Naive thymus-derived CD4-positive, alpha-beta T cell (primary cell): ENCODE measurements at regions of chrX and their contacts with region 1.

Region 1: DNA sequence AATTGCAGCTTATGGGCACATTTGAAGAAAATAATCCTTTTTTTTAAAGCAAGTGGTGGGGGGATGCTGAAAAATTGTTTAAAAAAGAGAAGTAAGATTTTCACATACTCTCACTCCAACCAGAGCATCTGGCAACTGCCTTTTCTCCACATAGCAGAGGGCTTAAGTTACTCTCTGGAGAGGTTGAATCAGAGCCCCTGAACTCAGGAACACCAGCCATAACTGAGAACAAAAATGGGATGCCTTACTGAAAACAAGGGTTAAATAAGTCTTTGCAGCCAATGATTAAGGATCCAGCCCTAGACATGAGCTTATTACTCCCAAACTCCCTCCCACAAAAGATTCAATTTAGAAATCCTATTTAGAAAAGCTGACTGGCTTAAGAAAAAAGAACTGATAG is 27.5 kb downstream of the CASK start:
- DNase-seq: no peak
- ATAC-seq: no peak
- H3K4me3 ChIP-seq: no peak overlapping the region
- H3K4me3 Mint-ChIP-seq: no peak overlapping the region
- H3K27ac ChIP-seq: no peak overlapping the region
- H3K27ac Mint-ChIP-seq: no peak overlapping the region
- H3K4me1 ChIP-seq: no peaks in the 10 kb centered on the region
- H3K4me1 Mint-ChIP-seq: peaks cover 0 to 8% (median 0%) of the 10 kb centered on the region in 7 donors
- H3K27me3 ChIP-seq: no peaks in the 10 kb centered on the region
- H3K27me3 Mint-ChIP-seq: no peaks in the 10 kb centered on the region

Region 2: DNA sequence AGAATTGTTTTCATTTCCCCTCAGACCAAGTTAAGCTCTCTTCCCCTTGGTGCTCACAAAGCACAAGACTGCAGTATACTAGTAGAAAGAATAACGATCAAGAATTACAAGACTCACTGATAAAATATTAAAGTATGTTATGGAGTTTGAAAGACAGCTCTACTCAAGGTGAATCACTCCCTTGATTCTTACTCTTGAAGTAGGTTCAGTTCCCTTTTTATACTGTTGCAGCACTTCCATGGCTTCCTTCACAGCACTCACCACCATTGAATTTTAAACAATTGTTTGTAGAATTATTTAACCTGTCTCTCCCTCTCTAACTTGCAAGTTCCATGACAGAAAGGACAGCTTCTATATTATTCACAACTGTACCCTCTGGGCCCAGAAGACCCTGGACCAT is 14.7 kb before region 1 on chrX:
- CTCF ChIA-PET with region 1: no interaction called
- POLR2A ChIA-PET with region 1: no interaction called
- intact Hi-C with region 1: loop called in 1 of 2 experiments (anchors 2 kb)
- DNase-seq: no peak
- ATAC-seq: peak; percentile 40
- H3K4me3 ChIP-seq: no peak overlapping the region
- H3K4me3 Mint-ChIP-seq: peak overlapping the region in 1 of 10 donors; percentile 15
- H3K27ac ChIP-seq: no peak overlapping the region
- H3K27ac Mint-ChIP-seq: no peak overlapping the region
- H3K4me1 ChIP-seq: peaks cover 0 to 3% of the 10 kb centered on the region in 2 donors
- H3K4me1 Mint-ChIP-seq: peaks cover 6 to 55% (median 34%) of the 10 kb centered on the region in 7 donors
- H3K27me3 ChIP-seq: no peaks in the 10 kb centered on the region
- H3K27me3 Mint-ChIP-seq: no peaks in the 10 kb centered on the region